ENCODE measurements at regions of chr7 and their contacts with region 1.

Region 1: GRCh38 chr7:111486472-111487142 is 75.7 kb downstream of the IMMP2L start:
- DNase-seq: peak in 1 of 3 donors; percentile 37
- ATAC-seq: peak; percentile 49
- H3K4me3 ChIP-seq: no peak overlapping the region
- H3K4me1 ChIP-seq: no peaks in the 10 kb centered on the region
- CTCF ChIP-seq: peak; percentile 12

Region 2: GRCh38 chr7:111089822-111090426 is 396.7 kb before region 1 on chr7:
- intact Hi-C with region 1: loop called (anchors 5 to 10 kb)
- DNase-seq: no peak
- ATAC-seq: peak; percentile 62
- H3K4me3 ChIP-seq: no peak overlapping the region
- H3K4me1 ChIP-seq: no peaks in the 10 kb centered on the region
- CTCF ChIP-seq: peak; percentile 47

Region 3: GRCh38 chr7:111098011-111098925 is 388.3 kb before region 1 on chr7:
- intact Hi-C with region 1: loop called (anchors 5 to 10 kb)
- DNase-seq: peak in 2 of 3 donors; percentile 31 to 47
- ATAC-seq: peak; percentile 71
- H3K4me3 ChIP-seq: no peak overlapping the region
- H3K4me1 ChIP-seq: no peaks in the 10 kb centered on the region
- CTCF ChIP-seq: peak; percentile 18

Region 4: GRCh38 chr7:111380945-111381344 is 105.7 kb before region 1 on chr7:
- intact Hi-C with region 1: no loop called
- DNase-seq: no peak
- ATAC-seq: no peak
- H3K4me3 ChIP-seq: no peak overlapping the region
- H3K4me1 ChIP-seq: no peaks in the 10 kb centered on the region
- CTCF ChIP-seq: no peak

Measured in mucosa of descending colon (tissue), 3 donors.